CD4-positive, alpha-beta memory T cell (primary cell): ENCODE measurements at regions of chr9 and their contacts with region 1.

Region 1: DNA sequence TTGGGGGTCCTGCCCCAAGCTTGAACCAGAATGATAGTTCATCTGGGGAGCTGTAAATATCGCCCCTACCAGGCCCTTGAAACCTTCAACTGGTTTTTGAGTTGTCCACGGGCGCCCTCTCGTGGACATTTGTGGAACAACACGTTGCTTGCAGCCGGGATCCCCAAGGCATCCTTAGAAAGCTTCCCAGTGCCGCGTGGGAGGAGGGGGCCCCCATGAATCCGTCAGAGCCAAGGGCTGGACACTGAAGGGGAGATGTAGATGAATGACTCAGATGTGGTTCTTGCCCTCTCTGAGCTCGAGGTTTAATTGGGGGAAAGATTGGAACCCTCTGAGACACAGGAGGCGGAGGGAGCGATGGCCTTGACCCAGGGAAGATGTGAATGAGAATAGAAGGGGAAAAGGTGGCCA is 31.8 kb upstream of the ORM1 start:
- DNase-seq: peak in 4 of 5 donors; percentile 53 to 62 (median 58)
- H3K4me3 ChIP-seq: no peak overlapping the region
- H3K4me3 Mint-ChIP-seq: no peak overlapping the region
- H3K27ac ChIP-seq: no peak overlapping the region
- H3K27ac Mint-ChIP-seq: peak overlapping the region in 3 of 7 donors; percentile 8 to 57 (median 49)
- H3K4me1 ChIP-seq: no peaks in the 10 kb centered on the region
- H3K4me1 Mint-ChIP-seq: peaks cover 2 to 6% (median 5%) of the 10 kb centered on the region in 4 donors
- H3K27me3 ChIP-seq: no peaks in the 10 kb centered on the region
- H3K27me3 Mint-ChIP-seq: peaks cover 3 to 7% of the 10 kb centered on the region in 2 donors

Region 2: GRCh38 chr9:114108016-114108833 is 182.8 kb before region 1 on chr9:
- CTCF ChIA-PET with region 1: interaction called, 19 read pairs
- POLR2A ChIA-PET with region 1: no interaction called
- intact Hi-C with region 1: loop called (anchors 1 kb)
- DNase-seq: peak in 4 of 5 donors; percentile 18 to 23 (median 21)
- H3K4me3 ChIP-seq: no peak overlapping the region
- H3K4me3 Mint-ChIP-seq: no peak overlapping the region
- H3K27ac ChIP-seq: no peak overlapping the region
- H3K27ac Mint-ChIP-seq: no peak overlapping the region
- H3K4me1 ChIP-seq: no peaks in the 10 kb centered on the region
- H3K4me1 Mint-ChIP-seq: no peaks in the 10 kb centered on the region
- H3K27me3 ChIP-seq: no peaks in the 10 kb centered on the region
- H3K27me3 Mint-ChIP-seq: peaks cover 8 to 10% of the 10 kb centered on the region in 2 donors

Region 3: GRCh38 chr9:114155263-114155972 is 135.7 kb before region 1 on chr9 and contains the start of gene COL27A1:
- CTCF ChIA-PET with region 1: interaction called, 10 read pairs
- POLR2A ChIA-PET with region 1: no interaction called
- intact Hi-C with region 1: no loop called
- DNase-seq: peak; percentile 62 to 73 (median 66)
- H3K4me3 ChIP-seq: peak within 1 kb of the TSS in 1 of 2 donors; percentile 15
- H3K4me3 Mint-ChIP-seq: peak within 1 kb of the TSS; percentile 90 to 99 (median 93)
- H3K27ac ChIP-seq: no peak within 1 kb of the TSS
- H3K27ac Mint-ChIP-seq: peak within 1 kb of the TSS in 5 of 7 donors; percentile 63 to 88 (median 70)
- H3K4me1 ChIP-seq: peaks cover 17% of the 10 kb centered on the region
- H3K4me1 Mint-ChIP-seq: peaks cover 15 to 28% (median 21%) of the 10 kb centered on the region in 4 donors
- H3K27me3 ChIP-seq: peaks cover 22% of the 10 kb centered on the region
- H3K27me3 Mint-ChIP-seq: peaks cover 20 to 39% of the 10 kb centered on the region in 2 donors
- total RNA-seq, gene COL27A1: 1.3 TPM

Region 4: DNA sequence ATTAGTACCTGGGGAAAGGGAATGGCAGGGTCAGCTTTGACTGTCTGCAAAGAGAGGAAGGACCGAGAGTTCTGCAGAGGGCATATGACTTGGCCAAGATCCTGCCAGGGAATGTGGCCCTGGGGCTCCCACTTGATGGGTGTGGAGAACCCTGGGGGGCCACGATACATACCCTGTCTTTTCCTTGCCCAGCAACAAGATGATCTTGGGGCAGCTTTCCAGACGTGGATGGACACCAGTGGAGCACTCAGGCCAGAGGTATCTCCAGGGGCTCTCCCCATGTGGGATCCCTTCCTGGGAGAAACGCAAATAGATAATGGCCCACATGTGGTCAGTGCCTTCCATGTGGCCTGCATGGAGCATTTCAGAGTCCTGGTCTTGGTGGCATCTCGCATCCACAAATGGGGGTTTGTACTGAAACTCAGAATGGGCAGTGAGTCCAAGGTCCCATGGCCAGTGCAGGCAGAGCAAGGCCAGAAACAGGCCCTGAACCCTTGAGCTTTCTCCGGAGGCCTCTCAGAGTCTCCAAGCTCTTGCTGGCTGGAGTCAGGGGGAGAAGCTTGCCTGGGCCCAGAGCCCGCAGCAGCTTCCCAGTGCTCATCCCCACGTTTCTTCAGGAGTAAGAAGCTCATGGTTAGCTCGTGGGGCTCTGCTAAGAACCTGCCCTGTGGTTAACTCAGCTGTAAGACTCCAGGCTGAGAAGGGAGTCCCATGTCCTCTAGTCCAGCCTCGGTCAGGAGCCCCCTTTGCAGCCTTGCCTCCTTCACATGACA is 13.5 kb after region 1 on chr9:
- CTCF ChIA-PET with region 1: no interaction called
- POLR2A ChIA-PET with region 1: no interaction called
- intact Hi-C with region 1: no loop called
- DNase-seq: no peak
- H3K4me3 ChIP-seq: no peak overlapping the region
- H3K4me3 Mint-ChIP-seq: no peak overlapping the region
- H3K27ac ChIP-seq: no peak overlapping the region
- H3K27ac Mint-ChIP-seq: peak overlapping the region in 1 of 7 donors; percentile 53
- H3K4me1 ChIP-seq: peaks cover 3% of the 10 kb centered on the region
- H3K4me1 Mint-ChIP-seq: peaks cover 0 to 14% (median 5%) of the 10 kb centered on the region in 4 donors
- H3K27me3 ChIP-seq: no peaks in the 10 kb centered on the region
- H3K27me3 Mint-ChIP-seq: no peaks in the 10 kb centered on the region